Activated B cell treated with CpG ODN at 0.5 μM for 24 hours (primary cell): ENCODE measurements at regions of chr17 and their contacts with region 1.

Region 1: DNA sequence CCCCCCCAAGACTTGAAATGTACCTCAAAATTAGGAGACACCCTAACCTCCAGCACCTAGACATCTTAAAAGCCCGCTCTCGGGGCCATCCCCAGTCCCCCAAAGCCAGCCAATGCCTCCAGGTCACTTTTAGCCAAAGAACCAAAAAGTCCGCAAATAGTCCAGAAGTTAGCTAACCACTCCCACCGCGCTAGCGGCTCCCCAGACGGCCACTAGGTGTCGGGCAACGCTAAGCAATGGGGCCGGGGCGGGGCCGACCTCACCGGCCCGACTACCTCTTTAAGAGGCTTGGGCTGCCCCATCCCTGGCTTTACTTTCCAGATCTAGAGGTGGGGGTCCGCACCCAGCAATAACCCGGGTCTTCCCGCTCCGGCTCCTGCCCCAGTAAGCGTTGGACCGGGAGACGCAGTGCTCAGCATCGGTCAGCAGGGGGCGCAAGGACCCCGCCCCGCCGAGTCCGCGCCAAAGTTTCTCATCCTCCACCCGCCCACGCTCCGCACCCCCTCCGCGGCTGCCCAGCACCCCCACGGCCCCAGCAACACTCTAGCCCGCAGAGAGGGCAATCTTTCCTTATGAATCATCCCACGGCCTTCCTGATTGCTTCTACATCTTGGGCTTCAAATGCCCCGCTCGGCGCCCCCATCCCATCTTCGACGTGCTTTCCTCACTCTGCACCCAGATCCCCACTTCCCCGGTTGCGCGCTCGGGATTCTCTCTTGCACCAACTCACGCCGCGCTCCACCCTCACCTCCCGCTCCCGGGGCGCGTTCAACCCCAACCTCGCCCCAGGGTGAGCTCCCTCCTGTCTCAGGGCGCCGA is 765 bp downstream of the COL1A1 start:
- DNase-seq: peak; percentile 76
- ATAC-seq: peak; percentile 80
- H3K4me3 Mint-ChIP-seq: peak overlapping the region; percentile 80
- H3K27ac Mint-ChIP-seq: no peak overlapping the region
- H3K4me1 Mint-ChIP-seq: peaks cover 27% of the 10 kb centered on the region
- H3K27me3 Mint-ChIP-seq: peaks cover 44% of the 10 kb centered on the region
- CTCF ChIP-seq: peak; percentile 100

Region 2: GRCh38 chr17:50026901-50027630 is 173.6 kb before region 1 on chr17:
- CTCF ChIA-PET with region 1: no interaction called
- POLR2A ChIA-PET with region 1: interaction called, 13 read pairs
- intact Hi-C with region 1: no loop called
- DNase-seq: peak; percentile 72
- ATAC-seq: peak; percentile 82
- H3K4me3 Mint-ChIP-seq: peak overlapping the region; percentile 11
- H3K27ac Mint-ChIP-seq: no peak overlapping the region
- H3K4me1 Mint-ChIP-seq: peaks cover 9% of the 10 kb centered on the region
- H3K27me3 Mint-ChIP-seq: peaks cover 25% of the 10 kb centered on the region
- CTCF ChIP-seq: peak; percentile 86

Region 3: GRCh38 chr17:50151041-50151936 is 49.4 kb before region 1 on chr17:
- CTCF ChIA-PET with region 1: interaction called, 9 read pairs
- POLR2A ChIA-PET with region 1: interaction called, 6 read pairs
- intact Hi-C with region 1: loop called (anchors 2 kb)
- DNase-seq: peak; percentile 80
- ATAC-seq: peak; percentile 40
- H3K4me3 Mint-ChIP-seq: peak overlapping the region; percentile 93
- H3K27ac Mint-ChIP-seq: peak overlapping the region; percentile 91
- H3K4me1 Mint-ChIP-seq: peaks cover 34% of the 10 kb centered on the region
- H3K27me3 Mint-ChIP-seq: no peaks in the 10 kb centered on the region
- CTCF ChIP-seq: no peak

Region 4: GRCh38 chr17:50177983-50178834 is 22.5 kb before region 1 on chr17:
- CTCF ChIA-PET with region 1: interaction called, 22 read pairs
- POLR2A ChIA-PET with region 1: interaction called, 6 read pairs
- intact Hi-C with region 1: no loop called
- DNase-seq: peak; percentile 45
- ATAC-seq: peak; percentile 99
- H3K4me3 Mint-ChIP-seq: peak overlapping the region; percentile 54
- H3K27ac Mint-ChIP-seq: no peak overlapping the region
- H3K4me1 Mint-ChIP-seq: peaks cover 18% of the 10 kb centered on the region
- H3K27me3 Mint-ChIP-seq: no peaks in the 10 kb centered on the region
- CTCF ChIP-seq: no peak

Region 5: DNA sequence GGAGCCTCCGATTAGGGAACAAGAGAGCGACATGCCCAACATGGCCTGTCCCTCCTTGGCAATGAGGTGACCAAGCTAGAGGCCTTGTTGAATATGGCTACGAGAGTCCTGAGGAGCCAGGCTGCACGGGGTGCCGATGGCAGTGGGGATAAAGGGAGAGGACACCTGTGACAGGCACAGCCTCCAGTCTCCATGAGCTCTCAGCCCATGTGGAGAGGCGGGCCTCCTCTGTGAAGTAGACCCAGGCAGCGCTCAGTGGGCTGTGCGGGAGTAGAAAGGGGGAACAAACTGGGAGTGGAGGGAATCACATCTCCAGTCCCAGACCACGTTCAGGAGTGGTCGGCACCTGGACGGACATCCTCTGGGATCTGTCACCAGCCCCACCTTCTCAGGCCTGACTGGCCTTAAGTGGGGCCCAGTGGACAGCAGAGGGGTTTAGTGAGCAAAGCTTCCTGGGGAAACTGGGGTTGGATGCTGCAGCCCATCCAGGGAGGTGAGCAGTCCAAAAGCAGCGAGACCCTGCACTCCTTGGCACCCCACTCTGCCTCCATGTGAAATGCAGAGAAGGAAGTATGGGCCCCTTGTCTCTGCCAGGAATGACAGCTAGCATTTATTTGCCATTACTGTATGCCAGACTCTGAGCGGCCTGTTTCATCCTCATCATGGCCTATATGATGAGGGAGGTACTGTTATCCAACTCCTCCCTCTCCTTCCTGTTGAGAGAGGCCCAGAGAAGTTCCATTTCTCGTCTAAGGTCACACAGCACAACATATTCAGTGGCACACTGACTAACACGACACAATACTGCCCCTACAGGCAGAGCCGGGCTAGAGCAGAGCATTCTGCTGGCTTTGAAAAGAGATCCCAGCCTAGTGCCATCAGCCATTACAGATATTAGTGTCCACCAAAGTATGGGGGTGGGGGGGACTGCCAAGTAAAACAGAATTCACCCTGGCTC is 69.1 kb after region 1 on chr17:
- CTCF ChIA-PET with region 1: interaction called, 56 read pairs
- POLR2A ChIA-PET with region 1: interaction called, 5 read pairs
- intact Hi-C with region 1: loop called (anchors 1 kb)
- DNase-seq: peak; percentile 31
- ATAC-seq: peak; percentile 76
- H3K4me3 Mint-ChIP-seq: no peak overlapping the region
- H3K27ac Mint-ChIP-seq: no peak overlapping the region
- H3K4me1 Mint-ChIP-seq: peaks cover 6% of the 10 kb centered on the region
- H3K27me3 Mint-ChIP-seq: peaks cover 26% of the 10 kb centered on the region
- CTCF ChIP-seq: no peak

Region 6: DNA sequence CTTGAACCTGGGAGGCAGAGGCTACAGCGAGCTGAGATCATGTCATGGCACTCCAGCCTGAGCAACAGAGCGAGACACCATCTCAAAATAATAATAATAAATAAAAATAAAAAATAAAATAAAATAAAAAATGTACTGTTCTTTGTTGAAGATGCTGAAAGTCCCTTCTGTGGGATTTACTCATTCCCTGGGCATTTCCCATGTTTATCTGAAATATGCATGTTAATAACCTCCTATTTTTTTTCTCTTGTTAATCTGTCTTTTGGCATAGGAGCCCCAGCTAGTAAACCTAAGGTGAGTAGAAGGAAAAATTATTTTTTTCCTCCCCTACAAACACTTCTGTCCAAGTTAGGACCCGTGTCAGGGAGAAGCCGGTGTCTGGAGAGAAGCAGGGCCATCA is 108.0 kb after region 1 on chr17:
- CTCF ChIA-PET with region 1: interaction called, 4 read pairs
- POLR2A ChIA-PET with region 1: interaction called, 10 read pairs
- intact Hi-C with region 1: no loop called
- DNase-seq: no peak
- ATAC-seq: no peak
- H3K4me3 Mint-ChIP-seq: no peak overlapping the region
- H3K27ac Mint-ChIP-seq: no peak overlapping the region
- H3K4me1 Mint-ChIP-seq: no peaks in the 10 kb centered on the region
- H3K27me3 Mint-ChIP-seq: peaks cover 25% of the 10 kb centered on the region
- CTCF ChIP-seq: no peak